CD4-positive, alpha-beta T cell (primary cell): ENCODE measurements at regions of chr7 and their contacts with region 1.

Region 1: DNA sequence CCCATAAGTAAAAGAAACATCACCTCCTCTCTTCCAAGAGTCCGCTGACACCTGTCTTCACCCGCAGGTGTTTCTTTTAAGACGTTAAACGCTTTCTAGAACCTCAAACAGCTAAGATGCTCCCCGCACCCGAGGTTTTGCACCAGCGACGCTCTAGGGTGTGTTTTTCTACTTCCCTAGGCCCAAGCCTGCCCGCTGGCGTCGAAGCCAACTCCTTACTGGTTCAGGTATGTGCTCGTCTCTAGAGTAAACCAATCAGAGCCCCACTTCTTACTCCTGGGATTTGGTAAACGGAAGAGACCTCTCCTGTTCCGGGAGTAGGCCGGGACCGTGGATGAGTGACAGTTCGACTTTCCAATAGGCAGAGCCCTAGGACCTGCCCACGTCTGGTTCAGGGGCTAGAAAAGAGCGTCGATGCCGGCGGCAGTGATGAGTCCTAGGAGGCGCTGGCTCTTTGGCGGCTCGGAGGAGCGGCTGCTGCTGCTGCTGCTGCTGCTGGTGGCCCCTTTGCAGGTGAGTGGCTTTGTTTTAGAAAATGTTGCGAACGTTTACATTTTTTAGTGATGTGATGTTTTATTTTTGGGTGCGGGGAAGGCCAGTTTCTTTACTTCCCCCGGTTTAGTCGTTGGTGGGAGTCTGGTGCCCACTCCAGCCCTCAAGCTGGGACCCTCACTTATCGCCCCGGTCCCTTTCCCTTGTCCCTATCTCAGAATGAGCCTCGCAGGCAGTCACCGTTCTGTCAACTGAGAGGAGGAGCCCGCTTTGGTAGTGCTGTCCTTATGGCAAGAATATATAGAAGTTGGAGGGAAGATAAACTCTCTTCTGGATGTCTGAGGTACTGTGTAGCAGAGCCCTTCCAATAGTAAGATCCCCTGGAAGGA is at the start of gene BPGM:
- DNase-seq: peak; percentile 92 to 100 (median 96)
- ATAC-seq: peak; percentile 91
- H3K4me3 ChIP-seq: peak within 1 kb of the TSS; percentile 88
- H3K4me3 Mint-ChIP-seq: no peak within 1 kb of the TSS
- H3K27ac ChIP-seq: peak within 1 kb of the TSS; percentile 92 to 93
- H3K27ac Mint-ChIP-seq: no peak within 1 kb of the TSS
- H3K4me1 ChIP-seq: peaks cover 25% of the 10 kb centered on the region
- H3K4me1 Mint-ChIP-seq: peaks cover 31% of the 10 kb centered on the region
- H3K27me3 ChIP-seq: no peaks in the 10 kb centered on the region
- H3K27me3 Mint-ChIP-seq: no peaks in the 10 kb centered on the region
- CTCF ChIP-seq: peak; percentile 65
- total RNA-seq, gene BPGM: 46.3 to 46.6 TPM

Region 2: DNA sequence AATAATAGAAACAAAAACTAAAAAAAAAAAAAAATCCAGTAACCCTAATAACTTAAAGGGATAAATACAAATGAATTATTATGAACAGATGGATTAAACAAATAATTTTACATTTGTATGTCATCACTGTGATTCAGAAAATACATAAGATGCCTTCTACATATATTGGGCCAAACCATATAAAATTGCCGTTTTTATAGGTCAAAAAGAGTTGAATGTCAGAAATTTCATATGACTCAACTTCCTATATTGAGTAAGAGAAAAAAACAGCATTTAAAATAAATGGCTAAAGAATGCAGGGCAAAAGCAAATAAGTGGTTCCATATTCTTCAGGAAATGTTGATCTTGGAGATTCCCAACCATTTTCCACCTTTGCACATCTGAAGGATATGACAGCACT is 339.3 kb before region 1 on chr7:
- CTCF ChIA-PET with region 1: no interaction called
- POLR2A ChIA-PET with region 1: no interaction called
- intact Hi-C with region 1: no loop called
- DNase-seq: no peak
- ATAC-seq: no peak
- H3K4me3 ChIP-seq: no peak overlapping the region
- H3K4me3 Mint-ChIP-seq: no peak overlapping the region
- H3K27ac ChIP-seq: no peak overlapping the region
- H3K27ac Mint-ChIP-seq: no peak overlapping the region
- H3K4me1 ChIP-seq: no peaks in the 10 kb centered on the region
- H3K4me1 Mint-ChIP-seq: peaks cover 9% of the 10 kb centered on the region
- H3K27me3 ChIP-seq: no peaks in the 10 kb centered on the region
- H3K27me3 Mint-ChIP-seq: no peaks in the 10 kb centered on the region
- CTCF ChIP-seq: no peak

Region 3: GRCh38 chr7:134527979-134528371 is 118.7 kb before region 1 on chr7:
- CTCF ChIA-PET with region 1: no interaction called
- POLR2A ChIA-PET with region 1: no interaction called
- intact Hi-C with region 1: no loop called
- DNase-seq: no peak
- ATAC-seq: no peak
- H3K4me3 ChIP-seq: no peak overlapping the region
- H3K4me3 Mint-ChIP-seq: no peak overlapping the region
- H3K27ac ChIP-seq: no peak overlapping the region
- H3K27ac Mint-ChIP-seq: no peak overlapping the region
- H3K4me1 ChIP-seq: no peaks in the 10 kb centered on the region
- H3K4me1 Mint-ChIP-seq: no peaks in the 10 kb centered on the region
- H3K27me3 ChIP-seq: peaks cover 0 to 3% of the 10 kb centered on the region in 2 experiments
- H3K27me3 Mint-ChIP-seq: peaks cover 17% of the 10 kb centered on the region
- CTCF ChIP-seq: no peak

Region 4: GRCh38 chr7:134660961-134661376 is 14.3 kb after region 1 on chr7:
- CTCF ChIA-PET with region 1: interaction called, 4 read pairs
- POLR2A ChIA-PET with region 1: interaction called, 32 read pairs
- intact Hi-C with region 1: no loop called
- DNase-seq: no peak
- ATAC-seq: no peak
- H3K4me3 ChIP-seq: no peak overlapping the region
- H3K4me3 Mint-ChIP-seq: no peak overlapping the region
- H3K27ac ChIP-seq: no peak overlapping the region
- H3K27ac Mint-ChIP-seq: no peak overlapping the region
- H3K4me1 ChIP-seq: no peaks in the 10 kb centered on the region
- H3K4me1 Mint-ChIP-seq: peaks cover 64% of the 10 kb centered on the region
- H3K27me3 ChIP-seq: no peaks in the 10 kb centered on the region
- H3K27me3 Mint-ChIP-seq: no peaks in the 10 kb centered on the region
- CTCF ChIP-seq: no peak

Region 5: DNA sequence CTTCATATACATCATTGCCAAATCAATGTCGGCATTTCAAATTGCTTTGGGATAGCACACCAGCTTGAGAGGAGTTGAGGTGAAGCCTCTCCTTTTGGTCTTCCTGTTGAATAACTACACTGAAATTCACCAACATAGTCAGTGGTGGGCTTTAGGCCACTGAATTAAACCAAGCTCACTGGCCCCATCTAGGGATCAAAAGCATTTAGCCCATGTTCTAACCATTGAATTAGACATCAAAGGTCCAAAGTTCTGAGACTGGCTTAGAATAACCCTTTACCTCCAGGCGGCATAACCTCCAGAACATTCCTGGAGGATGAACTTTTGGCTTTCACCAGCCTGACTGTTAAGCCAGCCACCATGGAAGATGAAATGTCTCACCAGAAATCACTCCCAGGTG is 54.6 kb after region 1 on chr7:
- CTCF ChIA-PET with region 1: interaction called, 7 read pairs
- POLR2A ChIA-PET with region 1: interaction called, 7 read pairs
- intact Hi-C with region 1: loop called in 1 of 2 experiments (anchors 2 kb)
- DNase-seq: peak in 9 of 14 experiments; percentile 5 to 63 (median 24)
- ATAC-seq: peak; percentile 73
- H3K4me3 ChIP-seq: no peak overlapping the region
- H3K4me3 Mint-ChIP-seq: no peak overlapping the region
- H3K27ac ChIP-seq: no peak overlapping the region
- H3K27ac Mint-ChIP-seq: no peak overlapping the region
- H3K4me1 ChIP-seq: no peaks in the 10 kb centered on the region
- H3K4me1 Mint-ChIP-seq: no peaks in the 10 kb centered on the region
- H3K27me3 ChIP-seq: no peaks in the 10 kb centered on the region
- H3K27me3 Mint-ChIP-seq: no peaks in the 10 kb centered on the region
- CTCF ChIP-seq: peak; percentile 59

Region 6: DNA sequence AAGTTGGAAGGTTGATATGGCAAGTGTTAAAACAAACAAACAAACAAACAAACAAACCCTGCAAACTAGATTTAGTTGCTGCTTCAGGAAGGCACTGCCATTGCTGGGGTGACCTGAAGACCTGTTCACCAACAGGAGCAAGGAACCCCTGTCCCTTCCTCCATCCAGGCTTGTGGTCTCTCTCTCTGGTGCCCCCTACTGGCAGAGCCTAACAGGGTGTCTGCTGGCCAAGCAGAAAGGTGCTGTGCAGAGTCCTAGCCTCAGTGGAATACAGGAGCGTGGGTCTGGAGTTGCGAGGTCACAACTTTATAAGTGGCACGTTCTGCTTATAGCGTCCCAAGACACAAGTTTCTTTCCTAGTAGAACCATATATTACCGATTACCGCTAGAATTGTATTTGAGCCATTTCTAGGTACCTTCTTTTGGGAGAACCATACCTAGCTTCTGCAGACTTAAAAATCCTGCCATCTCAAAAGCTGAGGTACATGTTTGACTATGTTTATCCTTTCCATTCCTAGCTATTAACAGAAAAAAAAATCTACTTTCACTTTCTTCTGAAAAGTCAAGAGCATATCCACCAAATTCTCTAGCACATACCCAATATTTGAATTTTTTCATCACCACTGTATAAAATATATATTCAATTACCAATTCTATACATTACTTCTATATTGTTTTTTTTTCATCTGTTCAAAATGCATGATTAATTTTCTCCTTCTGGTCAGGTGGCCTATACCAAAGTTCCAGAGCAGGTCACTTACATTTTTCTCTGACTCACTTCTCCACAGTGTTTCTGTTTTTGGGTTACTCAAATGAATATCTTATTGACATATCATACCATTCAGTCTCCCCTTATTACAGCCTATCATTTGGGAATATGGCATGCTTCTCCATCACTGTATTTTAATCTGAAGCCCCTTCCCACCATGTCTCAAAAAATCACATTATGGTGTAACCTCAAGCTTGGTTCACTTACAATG is 103.7 kb after region 1 on chr7:
- CTCF ChIA-PET with region 1: no interaction called
- POLR2A ChIA-PET with region 1: interaction called, 5 read pairs
- intact Hi-C with region 1: loop called in 1 of 2 experiments (anchors 5 kb)
- DNase-seq: peak; percentile 49 to 86 (median 62)
- ATAC-seq: peak; percentile 82
- H3K4me3 ChIP-seq: no peak overlapping the region
- H3K4me3 Mint-ChIP-seq: no peak overlapping the region
- H3K27ac ChIP-seq: no peak overlapping the region
- H3K27ac Mint-ChIP-seq: no peak overlapping the region
- H3K4me1 ChIP-seq: no peaks in the 10 kb centered on the region
- H3K4me1 Mint-ChIP-seq: no peaks in the 10 kb centered on the region
- H3K27me3 ChIP-seq: no peaks in the 10 kb centered on the region
- H3K27me3 Mint-ChIP-seq: no peaks in the 10 kb centered on the region
- CTCF ChIP-seq: peak; percentile 85

Region 7: GRCh38 chr7:135147899-135148721 is 501.4 kb after region 1 on chr7 and contains the start of gene TMEM140:
- CTCF ChIA-PET with region 1: no interaction called
- POLR2A ChIA-PET with region 1: interaction called, 36 read pairs
- intact Hi-C with region 1: loop called (anchors 5 to 10 kb)
- DNase-seq: peak; percentile 35 to 91 (median 58)
- ATAC-seq: peak; percentile 79
- H3K4me3 ChIP-seq: peak within 1 kb of the TSS; percentile 69
- H3K4me3 Mint-ChIP-seq: peak within 1 kb of the TSS; percentile 91
- H3K27ac ChIP-seq: peak within 1 kb of the TSS; percentile 87 to 89
- H3K27ac Mint-ChIP-seq: peak within 1 kb of the TSS; percentile 98
- H3K4me1 ChIP-seq: peaks cover 32% of the 10 kb centered on the region
- H3K4me1 Mint-ChIP-seq: peaks cover 81% of the 10 kb centered on the region
- H3K27me3 ChIP-seq: no peaks in the 10 kb centered on the region
- H3K27me3 Mint-ChIP-seq: no peaks in the 10 kb centered on the region
- CTCF ChIP-seq: no peak
- total RNA-seq, gene TMEM140: 27.7 to 32.2 TPM

Region 8: GRCh38 chr7:135211179-135211945 is 564.7 kb after region 1 on chr7 and contains the start of gene WDR91:
- CTCF ChIA-PET with region 1: no interaction called
- POLR2A ChIA-PET with region 1: interaction called, 7 read pairs
- intact Hi-C with region 1: loop called (anchors 1 to 2 kb)
- DNase-seq: peak; percentile 92 to 98 (median 97)
- ATAC-seq: peak; percentile 91
- H3K4me3 ChIP-seq: peak within 1 kb of the TSS; percentile 95
- H3K4me3 Mint-ChIP-seq: peak within 1 kb of the TSS; percentile 95
- H3K27ac ChIP-seq: peak within 1 kb of the TSS; percentile 77
- H3K27ac Mint-ChIP-seq: peak within 1 kb of the TSS; percentile 92
- H3K4me1 ChIP-seq: peaks cover 37% of the 10 kb centered on the region
- H3K4me1 Mint-ChIP-seq: peaks cover 42% of the 10 kb centered on the region
- H3K27me3 ChIP-seq: no peaks in the 10 kb centered on the region
- H3K27me3 Mint-ChIP-seq: no peaks in the 10 kb centered on the region
- CTCF ChIP-seq: no peak
- total RNA-seq, gene WDR91: 39.9 to 41.7 TPM